ENCODE measurements at regions of chr1 and their contacts with region 1.

Region 1: DNA sequence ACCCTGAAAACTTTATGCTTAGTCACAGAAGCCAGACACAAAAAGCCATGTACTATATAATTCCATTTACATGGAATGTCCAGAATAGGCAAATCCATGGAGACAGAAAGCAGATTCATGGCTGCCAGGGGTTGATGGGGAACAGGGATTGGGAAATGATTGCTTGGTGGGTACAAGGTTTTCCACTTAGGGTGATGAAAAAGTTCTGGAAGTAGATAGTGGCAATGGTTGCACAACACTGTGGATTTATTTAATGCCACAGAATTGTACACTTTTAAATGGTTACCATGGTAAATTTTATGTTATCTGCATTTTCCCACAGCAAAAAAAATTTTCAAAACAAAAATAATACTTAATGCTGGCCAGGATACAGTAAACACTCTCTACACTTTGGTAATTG is 40.6 kb downstream of the ENAH start:
- DNase-seq: peak in 1 of 2 experiments; percentile 10
- H3K4me3 ChIP-seq: no peak overlapping the region
- H3K27ac ChIP-seq: peak overlapping the region; percentile 43
- H3K4me1 ChIP-seq: peaks cover 15% of the 10 kb centered on the region
- H3K27me3 ChIP-seq: no peaks in the 10 kb centered on the region
- CTCF ChIP-seq: no peak

Region 2: GRCh38 chr1:225580238-225581099 is 31.8 kb before region 1 on chr1:
- CTCF ChIA-PET with region 1: no interaction called
- POLR2A ChIA-PET with region 1: interaction called, 10 read pairs
- intact Hi-C with region 1: no loop called
- DNase-seq: no peak
- H3K4me3 ChIP-seq: no peak overlapping the region
- H3K27ac ChIP-seq: no peak overlapping the region
- H3K4me1 ChIP-seq: no peaks in the 10 kb centered on the region
- H3K27me3 ChIP-seq: no peaks in the 10 kb centered on the region
- CTCF ChIP-seq: no peak

Region 3: GRCh38 chr1:225707824-225708223 is 95.5 kb after region 1 on chr1:
- CTCF ChIA-PET with region 1: interaction called, 13 read pairs
- POLR2A ChIA-PET with region 1: no interaction called
- intact Hi-C with region 1: no loop called
- DNase-seq: no peak
- H3K4me3 ChIP-seq: no peak overlapping the region
- H3K27ac ChIP-seq: no peak overlapping the region
- H3K4me1 ChIP-seq: peaks cover 17% of the 10 kb centered on the region
- H3K27me3 ChIP-seq: no peaks in the 10 kb centered on the region
- CTCF ChIP-seq: no peak

Measured in PC-9 (cell line).